ENCODE measurements at regions of chr6 and their contacts with region 1.

Region 1: DNA sequence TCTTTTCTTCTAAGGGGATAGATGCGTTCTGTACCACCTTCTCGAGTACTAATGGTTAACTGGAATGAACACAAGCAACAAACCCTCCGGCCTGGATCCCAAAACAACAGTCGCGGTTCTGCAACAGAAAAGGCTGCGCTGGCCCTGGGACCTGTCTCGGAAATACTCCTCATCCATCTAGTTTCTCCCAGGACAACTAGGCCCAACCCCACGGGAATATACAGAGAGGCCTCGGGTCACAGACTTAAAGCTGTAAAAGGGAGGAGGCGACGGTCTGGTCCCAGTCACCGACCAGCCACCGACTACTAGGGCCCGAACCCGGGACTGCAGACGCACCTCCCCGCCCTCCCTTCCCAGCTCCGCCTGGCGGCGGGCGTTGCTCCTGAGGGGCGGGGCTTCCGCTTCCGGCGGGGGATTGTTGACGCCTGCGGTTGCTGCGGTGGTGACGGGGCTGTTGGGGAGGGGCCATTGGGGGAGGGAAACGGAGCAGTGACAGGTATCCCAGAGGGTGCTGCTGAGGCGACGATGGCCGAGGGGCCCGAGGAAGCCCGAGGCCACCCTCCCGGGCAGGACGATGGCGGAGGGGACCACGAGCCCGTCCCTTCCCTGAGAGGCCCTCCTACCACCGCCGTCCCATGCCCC is at the start of gene FAM8A1:
- DNase-seq: peak; percentile 92 to 94 (median 93)
- H3K4me3 ChIP-seq: peak within 1 kb of the TSS; percentile 50 to 64
- H3K4me3 Mint-ChIP-seq: peak within 1 kb of the TSS; percentile 88 to 96 (median 92)
- H3K27ac ChIP-seq: peak within 1 kb of the TSS; percentile 78
- H3K27ac Mint-ChIP-seq: peak within 1 kb of the TSS; percentile 81 to 96 (median 92)
- H3K4me1 ChIP-seq: peaks cover 42% of the 10 kb centered on the region
- H3K4me1 Mint-ChIP-seq: peaks cover 22 to 50% (median 35%) of the 10 kb centered on the region in 4 donors
- H3K27me3 ChIP-seq: no peaks in the 10 kb centered on the region
- H3K27me3 Mint-ChIP-seq: no peaks in the 10 kb centered on the region
- total RNA-seq, gene FAM8A1: 20.2 to 21.2 TPM

Region 2: DNA sequence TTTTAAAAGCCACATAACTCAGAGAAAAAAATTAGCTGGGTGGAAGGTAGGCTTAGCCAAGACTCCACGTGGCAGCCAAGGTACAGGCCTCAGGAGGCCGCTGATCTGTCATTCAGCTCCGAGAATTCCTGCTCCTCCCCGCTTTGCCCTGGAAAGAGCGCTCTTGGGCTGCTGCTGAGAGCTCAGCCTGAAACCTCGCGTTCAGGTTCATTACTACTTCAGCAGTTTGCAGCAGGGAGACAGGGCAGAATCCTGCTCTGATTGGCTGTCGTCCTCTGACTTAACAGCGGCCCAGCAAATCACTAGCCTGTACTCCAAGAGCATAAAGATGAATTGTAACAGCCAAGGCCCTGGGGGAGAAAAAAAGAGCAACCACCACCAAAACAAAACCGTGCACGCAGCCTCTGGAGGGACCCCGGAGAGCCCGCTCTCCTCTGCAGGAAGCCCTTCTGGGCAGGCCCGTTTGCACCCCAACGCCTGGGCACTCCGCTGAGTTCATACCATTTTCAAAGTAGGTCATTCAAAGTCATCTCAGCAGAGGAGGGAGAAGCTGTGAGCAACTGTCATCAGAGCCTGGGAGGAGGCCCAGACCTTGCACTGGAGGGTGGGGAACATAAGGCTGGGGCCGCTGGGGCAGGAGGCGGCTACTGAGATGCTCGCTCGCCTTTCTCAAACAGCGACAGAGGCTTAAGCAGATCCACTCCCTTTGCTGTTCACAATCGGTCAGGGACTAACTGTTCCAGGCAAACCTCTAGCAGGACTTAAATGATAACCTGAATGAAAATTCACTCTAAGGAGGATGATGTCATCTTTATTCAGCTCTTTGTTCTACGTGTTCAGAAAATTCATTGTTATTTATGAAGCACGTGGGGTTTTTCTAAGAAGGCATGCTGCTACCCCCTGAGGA is 796.5 kb before region 1 on chr6:
- CTCF ChIA-PET with region 1: no interaction called
- POLR2A ChIA-PET with region 1: no interaction called
- intact Hi-C with region 1: no loop called
- DNase-seq: no peak
- H3K4me3 ChIP-seq: no peak overlapping the region
- H3K4me3 Mint-ChIP-seq: no peak overlapping the region
- H3K27ac ChIP-seq: no peak overlapping the region
- H3K27ac Mint-ChIP-seq: no peak overlapping the region
- H3K4me1 ChIP-seq: no peaks in the 10 kb centered on the region
- H3K4me1 Mint-ChIP-seq: no peaks in the 10 kb centered on the region
- H3K27me3 ChIP-seq: no peaks in the 10 kb centered on the region
- H3K27me3 Mint-ChIP-seq: no peaks in the 10 kb centered on the region

Region 3: DNA sequence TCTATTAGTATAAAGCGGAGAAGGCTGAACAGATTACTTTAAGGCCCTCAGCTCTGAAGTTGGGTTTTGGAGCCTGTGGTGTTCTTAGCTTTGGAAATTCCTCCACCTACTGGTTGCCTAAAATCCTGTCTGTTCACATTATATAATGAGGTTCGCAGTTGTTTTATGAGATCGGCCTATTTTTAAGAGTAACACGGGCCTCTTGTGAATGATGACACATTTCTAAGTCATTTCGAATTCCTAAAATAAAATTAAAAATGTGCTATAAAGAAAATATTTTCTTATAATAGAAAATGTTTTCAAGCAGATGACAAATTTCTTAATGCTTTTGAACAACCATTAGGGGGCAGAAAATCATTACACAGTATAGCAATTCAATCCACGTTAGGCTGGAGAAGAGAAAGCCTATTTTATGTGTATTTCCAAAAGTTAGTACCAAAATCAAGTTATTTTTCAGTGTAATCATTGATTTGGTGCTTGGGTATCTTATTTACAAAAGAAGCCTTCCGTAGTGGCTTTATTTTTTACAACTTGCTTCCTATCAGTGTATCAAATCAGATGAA is 15.7 kb before region 1 on chr6:
- CTCF ChIA-PET with region 1: interaction called, 18 read pairs
- POLR2A ChIA-PET with region 1: interaction called, 7 read pairs
- intact Hi-C with region 1: loop called (anchors 1 kb)
- DNase-seq: peak in 4 of 5 donors; percentile 45 to 52 (median 47)
- H3K4me3 ChIP-seq: no peak overlapping the region
- H3K4me3 Mint-ChIP-seq: peak overlapping the region in 2 of 8 donors; percentile 1 to 3
- H3K27ac ChIP-seq: no peak overlapping the region
- H3K27ac Mint-ChIP-seq: peak overlapping the region in 3 of 7 donors; percentile 0 to 58 (median 2)
- H3K4me1 ChIP-seq: peaks cover 2% of the 10 kb centered on the region
- H3K4me1 Mint-ChIP-seq: peaks cover 2 to 4% (median 3%) of the 10 kb centered on the region in 4 donors
- H3K27me3 ChIP-seq: no peaks in the 10 kb centered on the region
- H3K27me3 Mint-ChIP-seq: peaks cover 5 to 10% of the 10 kb centered on the region in 2 donors

Region 4: GRCh38 chr6:17621003-17621402 is 21.0 kb after region 1 on chr6:
- CTCF ChIA-PET with region 1: interaction called, 10 read pairs
- POLR2A ChIA-PET with region 1: interaction called, 9 read pairs
- intact Hi-C with region 1: no loop called
- DNase-seq: no peak
- H3K4me3 ChIP-seq: no peak overlapping the region
- H3K4me3 Mint-ChIP-seq: no peak overlapping the region
- H3K27ac ChIP-seq: no peak overlapping the region
- H3K27ac Mint-ChIP-seq: peak overlapping the region in 4 of 7 donors; percentile 10 to 46 (median 30)
- H3K4me1 ChIP-seq: no peaks in the 10 kb centered on the region
- H3K4me1 Mint-ChIP-seq: peaks cover 7 to 20% (median 12%) of the 10 kb centered on the region in 4 donors
- H3K27me3 ChIP-seq: no peaks in the 10 kb centered on the region
- H3K27me3 Mint-ChIP-seq: no peaks in the 10 kb centered on the region

Region 5: DNA sequence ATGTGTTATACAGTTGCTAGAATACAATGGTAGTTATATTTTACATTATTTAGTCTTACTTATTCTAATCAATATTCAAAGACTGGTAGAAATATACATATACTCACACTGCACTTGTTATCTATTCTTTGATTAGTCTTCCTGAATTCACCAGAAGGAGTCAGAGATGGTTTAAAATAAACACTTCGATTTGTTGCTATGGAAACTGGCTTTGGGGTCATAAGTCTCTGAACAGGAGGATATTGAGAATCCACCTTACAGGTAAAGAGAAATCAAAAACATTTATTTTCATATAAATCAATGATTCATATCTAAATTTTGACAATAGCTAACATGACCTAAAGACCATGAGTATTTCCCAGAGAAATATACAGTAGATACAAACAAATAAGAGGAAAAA is 65.1 kb after region 1 on chr6:
- CTCF ChIA-PET with region 1: no interaction called
- POLR2A ChIA-PET with region 1: interaction called, 3 read pairs
- intact Hi-C with region 1: loop called (anchors 5 kb)
- DNase-seq: peak in 3 of 5 donors; percentile 6 to 24 (median 8)
- H3K4me3 ChIP-seq: no peak overlapping the region
- H3K4me3 Mint-ChIP-seq: peak overlapping the region in 6 of 8 donors; percentile 20 to 84 (median 56)
- H3K27ac ChIP-seq: peak overlapping the region; percentile 20
- H3K27ac Mint-ChIP-seq: peak overlapping the region in 6 of 7 donors; percentile 62 to 88 (median 74)
- H3K4me1 ChIP-seq: peaks cover 26% of the 10 kb centered on the region
- H3K4me1 Mint-ChIP-seq: peaks cover 20 to 36% (median 29%) of the 10 kb centered on the region in 4 donors
- H3K27me3 ChIP-seq: no peaks in the 10 kb centered on the region
- H3K27me3 Mint-ChIP-seq: no peaks in the 10 kb centered on the region

Region 6: GRCh38 chr6:17700421-17701416 is 100.7 kb after region 1 on chr6:
- CTCF ChIA-PET with region 1: interaction called, 25 read pairs
- POLR2A ChIA-PET with region 1: interaction called, 94 read pairs
- intact Hi-C with region 1: no loop called
- DNase-seq: no peak
- H3K4me3 ChIP-seq: no peak overlapping the region
- H3K4me3 Mint-ChIP-seq: peak overlapping the region in 4 of 8 donors; percentile 13 to 43 (median 23)
- H3K27ac ChIP-seq: peak overlapping the region; percentile 14
- H3K27ac Mint-ChIP-seq: peak overlapping the region in 6 of 7 donors; percentile 53 to 93 (median 78)
- H3K4me1 ChIP-seq: peaks cover 60% of the 10 kb centered on the region
- H3K4me1 Mint-ChIP-seq: peaks cover 30 to 77% (median 54%) of the 10 kb centered on the region in 4 donors
- H3K27me3 ChIP-seq: no peaks in the 10 kb centered on the region
- H3K27me3 Mint-ChIP-seq: no peaks in the 10 kb centered on the region

Region 7: GRCh38 chr6:17803409-17803808 is 203.4 kb after region 1 on chr6:
- CTCF ChIA-PET with region 1: interaction called, 11 read pairs
- POLR2A ChIA-PET with region 1: no interaction called
- intact Hi-C with region 1: no loop called
- DNase-seq: no peak
- H3K4me3 ChIP-seq: no peak overlapping the region
- H3K4me3 Mint-ChIP-seq: no peak overlapping the region
- H3K27ac ChIP-seq: no peak overlapping the region
- H3K27ac Mint-ChIP-seq: no peak overlapping the region
- H3K4me1 ChIP-seq: no peaks in the 10 kb centered on the region
- H3K4me1 Mint-ChIP-seq: peaks cover 0 to 3% (median 0%) of the 10 kb centered on the region in 4 donors
- H3K27me3 ChIP-seq: no peaks in the 10 kb centered on the region
- H3K27me3 Mint-ChIP-seq: peaks cover 5 to 11% of the 10 kb centered on the region in 2 donors

Region 8: DNA sequence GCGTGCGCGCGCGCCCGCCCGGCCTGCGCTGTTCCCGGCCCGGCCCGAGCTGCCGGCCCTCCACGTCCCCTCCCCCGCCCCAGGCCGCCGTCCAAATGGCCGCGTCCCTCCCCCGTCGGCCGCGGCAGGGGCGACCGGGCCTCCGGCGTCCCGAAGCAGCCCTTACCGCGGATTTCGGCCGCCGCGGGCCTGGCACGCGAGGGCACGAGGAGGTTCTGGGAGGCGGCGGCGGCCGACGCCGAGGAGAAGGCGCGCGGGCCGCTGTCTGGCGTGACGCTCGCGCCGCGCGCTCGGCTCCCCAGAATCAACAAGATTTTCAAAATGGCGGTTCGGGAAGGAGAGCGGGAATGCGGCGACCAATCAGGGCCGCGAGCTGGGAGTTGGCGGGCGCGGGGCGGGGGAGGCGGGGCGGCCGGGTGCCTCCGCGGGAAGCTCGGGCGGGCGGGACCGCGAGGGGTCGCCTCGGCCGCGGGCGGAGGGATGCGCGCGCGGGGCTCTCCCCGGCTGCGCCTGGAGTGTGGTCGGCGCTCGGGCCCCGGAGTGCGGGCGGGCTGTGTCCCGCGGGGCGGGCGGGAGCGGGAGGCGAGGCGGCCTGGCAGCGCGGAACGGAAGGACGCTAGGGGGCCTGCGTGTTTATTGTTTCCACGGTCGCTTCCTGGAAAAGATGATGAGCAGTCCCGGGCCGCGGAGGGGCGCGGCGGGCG is 664.4 kb after region 1 on chr6 and contains the start of gene DEK:
- CTCF ChIA-PET with region 1: no interaction called
- POLR2A ChIA-PET with region 1: interaction called, 3 read pairs
- intact Hi-C with region 1: loop called (anchors 2 kb)
- DNase-seq: peak; percentile 79 to 90 (median 81)
- H3K4me3 ChIP-seq: peak within 1 kb of the TSS; percentile 82 to 89
- H3K4me3 Mint-ChIP-seq: peak within 1 kb of the TSS; percentile 95 to 98 (median 96)
- H3K27ac ChIP-seq: peak within 1 kb of the TSS; percentile 76
- H3K27ac Mint-ChIP-seq: peak within 1 kb of the TSS; percentile 96 to 99 (median 98)
- H3K4me1 ChIP-seq: peaks cover 57% of the 10 kb centered on the region
- H3K4me1 Mint-ChIP-seq: peaks cover 42 to 55% (median 49%) of the 10 kb centered on the region in 4 donors
- H3K27me3 ChIP-seq: no peaks in the 10 kb centered on the region
- H3K27me3 Mint-ChIP-seq: no peaks in the 10 kb centered on the region
- total RNA-seq, gene DEK: 128 to 131 TPM

Measured in CD4-positive, alpha-beta memory T cell (primary cell).